Activated B cell treated with CpG ODN at 0.5 μM for 24 hours (primary cell): ENCODE measurements at regions of chr2 and their contacts with region 1.

Region 1: DNA sequence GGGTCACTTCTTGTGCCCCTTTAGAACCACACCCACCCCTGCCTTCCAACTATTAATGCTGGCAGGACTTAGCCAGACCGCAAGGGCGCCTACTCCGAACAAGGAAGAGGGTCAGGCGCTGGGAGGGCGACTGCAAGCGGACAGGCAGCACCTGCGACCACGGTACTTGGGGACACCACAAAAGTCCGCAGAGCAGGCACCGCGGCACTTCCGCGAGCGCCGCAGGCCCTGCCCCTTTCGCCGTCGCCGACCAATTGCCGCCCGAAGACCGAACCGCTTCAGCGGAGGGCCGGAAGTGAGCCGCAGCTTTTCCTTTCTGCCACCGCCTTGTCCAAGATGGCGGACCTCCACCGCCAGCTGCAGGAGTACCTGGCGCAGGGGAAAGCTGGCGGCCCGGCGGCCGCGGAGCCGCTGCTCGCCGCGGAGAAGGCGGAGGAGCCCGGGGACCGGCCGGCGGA is at the start of gene SFT2D3:
- DNase-seq: peak; percentile 85
- ATAC-seq: peak; percentile 74
- H3K4me3 Mint-ChIP-seq: peak within 1 kb of the TSS; percentile 93
- H3K27ac Mint-ChIP-seq: peak within 1 kb of the TSS; percentile 99
- H3K4me1 Mint-ChIP-seq: peaks cover 40% of the 10 kb centered on the region
- H3K27me3 Mint-ChIP-seq: no peaks in the 10 kb centered on the region
- CTCF ChIP-seq: no peak
- total RNA-seq, gene SFT2D3: 9.6 and 10.1 TPM in 2 replicates

Region 2: DNA sequence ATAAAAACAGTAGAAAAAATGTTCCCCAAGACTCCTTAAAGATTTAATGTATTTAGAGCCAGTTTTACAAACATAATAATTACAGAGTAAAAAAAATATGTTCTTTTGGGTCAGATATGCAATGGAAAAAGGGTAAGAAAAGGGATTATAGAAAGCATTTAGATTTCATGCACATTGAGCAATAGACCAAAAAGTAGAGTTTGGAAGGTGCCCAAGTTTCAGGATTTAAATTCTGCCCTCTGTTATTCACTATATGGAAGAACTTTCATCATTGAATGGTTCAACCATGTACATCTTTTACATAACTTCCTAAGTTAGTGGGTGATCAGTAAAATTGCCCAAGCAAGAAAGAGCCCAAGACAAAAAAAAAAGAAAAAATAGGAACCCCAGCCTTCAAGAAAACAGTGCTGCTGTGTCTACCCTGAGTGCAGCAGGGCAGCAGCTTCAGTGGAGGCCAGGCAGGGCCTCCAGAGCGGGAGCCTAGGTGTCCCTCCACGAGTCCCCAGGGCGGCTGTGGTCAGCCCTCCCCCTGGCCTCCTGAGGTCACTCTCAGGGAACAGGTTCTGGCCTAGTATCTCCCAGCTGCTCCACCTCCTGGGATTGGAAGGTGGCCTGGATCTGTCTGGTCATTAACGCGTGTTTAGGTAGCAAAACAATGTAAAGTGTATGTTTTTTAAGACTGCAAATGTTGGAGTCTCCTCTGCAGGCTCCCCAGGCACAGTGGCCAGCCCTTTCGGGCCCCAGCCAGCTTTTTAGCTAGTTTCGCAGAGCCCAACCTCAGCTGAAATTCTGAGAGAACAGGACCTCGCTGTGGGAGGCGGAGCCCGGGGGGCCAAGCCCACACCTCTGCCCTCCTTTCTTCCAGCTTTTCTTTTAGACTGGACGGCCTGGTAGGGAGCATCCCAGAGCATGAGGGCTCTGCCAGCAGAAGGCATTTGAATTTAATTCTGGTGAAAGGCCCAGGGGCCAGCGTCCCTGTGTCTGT is 725.3 kb before region 1 on chr2:
- CTCF ChIA-PET with region 1: no interaction called
- POLR2A ChIA-PET with region 1: no interaction called
- intact Hi-C with region 1: no loop called
- DNase-seq: no peak
- ATAC-seq: no peak
- H3K4me3 Mint-ChIP-seq: no peak overlapping the region
- H3K27ac Mint-ChIP-seq: no peak overlapping the region
- H3K4me1 Mint-ChIP-seq: no peaks in the 10 kb centered on the region
- H3K27me3 Mint-ChIP-seq: peaks cover 16% of the 10 kb centered on the region
- CTCF ChIP-seq: no peak

Region 3: DNA sequence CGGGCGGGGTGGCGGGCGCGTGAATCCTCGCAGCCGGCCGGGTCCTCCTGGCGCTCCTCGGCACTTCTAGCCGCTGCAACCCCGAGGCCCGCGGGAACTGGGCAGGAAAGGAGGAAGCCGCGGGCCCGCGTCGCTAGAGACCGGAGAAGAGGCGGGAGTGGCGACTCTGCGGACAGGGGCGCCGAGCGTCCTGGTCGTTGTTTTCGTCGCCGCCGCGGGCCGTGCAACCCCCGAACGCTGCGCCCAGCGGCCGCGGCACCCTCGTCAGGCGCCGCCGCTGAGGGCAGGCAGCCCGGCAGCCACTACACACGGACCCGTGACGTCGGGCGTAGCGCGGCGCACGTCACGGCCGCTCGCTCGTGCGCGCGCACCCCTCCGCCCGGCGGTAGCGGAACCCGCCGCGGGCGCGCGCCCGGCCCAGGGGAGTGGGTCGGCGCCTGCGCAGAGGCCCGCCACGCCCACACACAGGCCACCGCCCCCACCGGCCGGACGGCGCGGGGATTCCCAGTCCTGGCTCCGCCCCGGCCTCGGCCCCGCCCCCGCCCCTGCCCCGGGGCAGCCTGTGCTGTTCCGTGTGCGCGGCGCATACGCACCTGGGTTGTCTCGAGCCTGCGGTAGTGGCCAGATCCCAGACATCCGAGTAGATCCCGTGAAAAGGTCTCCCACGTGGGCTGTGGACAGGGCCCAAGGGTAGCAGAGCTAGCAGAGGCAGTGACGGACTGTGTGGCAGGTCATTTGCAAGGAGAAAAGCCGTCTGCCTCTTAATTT is 313.4 kb before region 1 on chr2 and contains the start of gene MAP3K2:
- CTCF ChIA-PET with region 1: no interaction called
- POLR2A ChIA-PET with region 1: no interaction called
- intact Hi-C with region 1: loop called (anchors 2 kb)
- DNase-seq: peak; percentile 95
- ATAC-seq: peak; percentile 73
- H3K4me3 Mint-ChIP-seq: peak within 1 kb of the TSS; percentile 87
- H3K27ac Mint-ChIP-seq: peak within 1 kb of the TSS; percentile 100
- H3K4me1 Mint-ChIP-seq: peaks cover 75% of the 10 kb centered on the region
- H3K27me3 Mint-ChIP-seq: no peaks in the 10 kb centered on the region
- CTCF ChIP-seq: no peak
- total RNA-seq, gene MAP3K2: 63.1 and 77.7 TPM in 2 replicates

Region 4: GRCh38 chr2:127591221-127591923 is 109.8 kb before region 1 on chr2:
- CTCF ChIA-PET with region 1: interaction called, 14 read pairs
- POLR2A ChIA-PET with region 1: interaction called, 15 read pairs
- intact Hi-C with region 1: loop called (anchors 1 kb)
- DNase-seq: peak; percentile 72
- ATAC-seq: peak; percentile 99
- H3K4me3 Mint-ChIP-seq: no peak overlapping the region
- H3K27ac Mint-ChIP-seq: no peak overlapping the region
- H3K4me1 Mint-ChIP-seq: peaks cover 31% of the 10 kb centered on the region
- H3K27me3 Mint-ChIP-seq: no peaks in the 10 kb centered on the region
- CTCF ChIP-seq: no peak

Region 5: DNA sequence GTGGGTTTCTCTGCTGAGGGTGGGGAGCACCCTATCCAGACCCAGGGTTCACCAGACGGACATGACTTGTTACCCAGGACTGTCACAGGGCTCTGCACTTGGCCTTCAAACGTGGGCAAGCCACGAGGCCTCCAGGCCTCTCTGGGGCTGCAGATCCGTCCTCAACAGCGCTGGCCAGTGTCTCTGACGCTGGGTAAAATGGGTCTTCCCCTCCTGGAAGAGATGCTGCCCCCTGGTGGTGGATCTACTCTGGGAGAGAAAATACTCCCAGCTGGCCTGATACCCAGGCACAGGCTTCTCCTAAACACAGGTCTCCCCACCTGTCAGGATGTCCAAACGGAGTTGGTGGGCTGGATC is 51.6 kb before region 1 on chr2:
- CTCF ChIA-PET with region 1: interaction called, 3 read pairs
- POLR2A ChIA-PET with region 1: interaction called, 7 read pairs
- intact Hi-C with region 1: loop called (anchors 1 kb)
- DNase-seq: peak; percentile 68
- ATAC-seq: peak; percentile 80
- H3K4me3 Mint-ChIP-seq: peak overlapping the region; percentile 52
- H3K27ac Mint-ChIP-seq: no peak overlapping the region
- H3K4me1 Mint-ChIP-seq: peaks cover 63% of the 10 kb centered on the region
- H3K27me3 Mint-ChIP-seq: no peaks in the 10 kb centered on the region
- CTCF ChIP-seq: no peak

Region 6: GRCh38 chr2:127810619-127811396 is 109.6 kb after region 1 on chr2 and contains the start of gene WDR33:
- CTCF ChIA-PET with region 1: no interaction called
- POLR2A ChIA-PET with region 1: interaction called, 11 read pairs
- intact Hi-C with region 1: loop called (anchors 1 kb)
- DNase-seq: peak; percentile 88
- ATAC-seq: peak; percentile 96
- H3K4me3 Mint-ChIP-seq: peak within 1 kb of the TSS; percentile 89
- H3K27ac Mint-ChIP-seq: peak within 1 kb of the TSS; percentile 99
- H3K4me1 Mint-ChIP-seq: peaks cover 56% of the 10 kb centered on the region
- H3K27me3 Mint-ChIP-seq: no peaks in the 10 kb centered on the region
- CTCF ChIP-seq: no peak
- total RNA-seq, gene WDR33: 83.0 and 93.0 TPM in 2 replicates

Region 7: GRCh38 chr2:128027801-128028667 is 326.8 kb after region 1 on chr2 and contains the start of gene SAP130:
- CTCF ChIA-PET with region 1: no interaction called
- POLR2A ChIA-PET with region 1: no interaction called
- intact Hi-C with region 1: loop called (anchors 1 kb)
- DNase-seq: peak; percentile 98
- ATAC-seq: peak; percentile 78
- H3K4me3 Mint-ChIP-seq: peak within 1 kb of the TSS; percentile 92
- H3K27ac Mint-ChIP-seq: peak within 1 kb of the TSS; percentile 84
- H3K4me1 Mint-ChIP-seq: peaks cover 18% of the 10 kb centered on the region
- H3K27me3 Mint-ChIP-seq: peaks cover 4% of the 10 kb centered on the region
- CTCF ChIP-seq: no peak
- total RNA-seq, gene SAP130: 24.7 and 27.1 TPM in 2 replicates